Left cardiac atrium (tissue), 4 donors: ENCODE measurements at regions of chr13 and their contacts with region 1.

Region 1: GRCh38 chr13:25574437-25575411 is 202.9 kb downstream of the ATP8A2 start:
- DNase-seq: peak; percentile 77
- ATAC-seq: peak; percentile 87 to 93

Region 2: DNA sequence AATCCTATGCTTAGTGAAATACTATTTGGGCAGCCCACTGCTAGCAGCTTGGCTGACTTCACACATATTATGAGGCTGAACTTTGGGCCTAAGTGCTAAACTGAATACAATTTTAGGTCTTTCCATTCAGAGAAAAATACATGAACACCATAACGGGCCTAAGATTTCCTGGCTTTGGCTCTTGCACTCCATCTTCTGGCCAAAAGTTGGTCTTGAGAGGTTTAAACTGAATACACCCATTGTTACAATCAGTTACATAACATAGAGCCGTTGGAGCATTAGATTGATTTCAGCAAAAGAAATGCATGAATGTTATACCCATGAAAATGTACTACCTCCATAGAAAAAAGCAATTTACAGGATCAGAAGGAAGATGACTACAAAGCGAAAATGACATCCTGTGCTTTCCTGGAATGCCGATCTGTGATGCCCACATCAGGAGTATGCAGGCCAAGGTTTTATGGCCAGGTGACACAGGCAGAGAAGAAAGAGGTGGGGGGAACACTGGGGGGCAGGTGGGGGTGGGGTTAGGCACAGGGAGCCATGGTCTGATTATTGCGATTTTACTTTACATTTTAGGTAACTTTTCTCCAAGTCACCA is 488.2 kb after region 1 on chr13:
- intact Hi-C with region 1: loop called (anchors 2 to 5 kb)
- DNase-seq: no peak
- ATAC-seq: peak; percentile 87